ENCODE measurements at regions of chr5 and their contacts with region 1.

Region 1: DNA sequence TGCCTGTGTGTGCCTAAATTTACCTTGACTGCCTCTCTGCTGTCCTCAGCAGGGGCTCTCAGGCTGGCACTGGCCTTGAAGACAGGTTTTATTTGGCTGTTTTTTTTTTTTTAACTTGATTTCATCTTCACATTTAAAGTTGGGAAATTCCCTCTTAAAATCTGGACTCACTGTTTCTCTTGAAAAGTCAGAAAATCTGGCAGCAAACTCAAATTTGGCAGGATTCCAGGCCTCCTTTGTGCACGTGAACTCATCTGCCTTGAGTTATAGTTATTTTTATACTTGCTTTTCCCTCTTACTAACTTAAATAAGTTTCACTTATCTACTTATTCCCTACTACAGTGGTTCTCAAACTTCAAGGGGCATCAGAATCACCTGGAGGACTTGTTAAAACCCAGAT is 118.4 kb upstream of the MAP3K1 start:
- DNase-seq: peak in 1 of 5 donors; percentile 49
- H3K4me3 ChIP-seq: no peak overlapping the region
- H3K4me3 Mint-ChIP-seq: peak overlapping the region in 4 of 8 donors; percentile 11 to 60 (median 29)
- H3K27ac ChIP-seq: no peak overlapping the region
- H3K27ac Mint-ChIP-seq: peak overlapping the region; percentile 64 to 82 (median 75)
- H3K4me1 ChIP-seq: peaks cover 91% of the 10 kb centered on the region
- H3K4me1 Mint-ChIP-seq: peaks cover 72 to 98% (median 86%) of the 10 kb centered on the region in 4 donors
- H3K27me3 ChIP-seq: no peaks in the 10 kb centered on the region
- H3K27me3 Mint-ChIP-seq: no peaks in the 10 kb centered on the region

Region 2: GRCh38 chr5:56588636-56589480 is 108.0 kb before region 1 on chr5:
- CTCF ChIA-PET with region 1: interaction called, 5 read pairs
- POLR2A ChIA-PET with region 1: interaction called, 11 read pairs
- intact Hi-C with region 1: loop called (anchors 5 kb)
- DNase-seq: peak; percentile 73 to 88 (median 82)
- H3K4me3 ChIP-seq: no peak overlapping the region
- H3K4me3 Mint-ChIP-seq: peak overlapping the region; percentile 49 to 81 (median 68)
- H3K27ac ChIP-seq: peak overlapping the region; percentile 72
- H3K27ac Mint-ChIP-seq: peak overlapping the region; percentile 91 to 98 (median 95)
- H3K4me1 ChIP-seq: peaks cover 52% of the 10 kb centered on the region
- H3K4me1 Mint-ChIP-seq: peaks cover 52 to 74% (median 61%) of the 10 kb centered on the region in 4 donors
- H3K27me3 ChIP-seq: no peaks in the 10 kb centered on the region
- H3K27me3 Mint-ChIP-seq: no peaks in the 10 kb centered on the region

Region 3: GRCh38 chr5:56670118-56670483 is 26.8 kb before region 1 on chr5:
- CTCF ChIA-PET with region 1: interaction called, 16 read pairs
- POLR2A ChIA-PET with region 1: interaction called, 11 read pairs
- intact Hi-C with region 1: no loop called
- DNase-seq: peak in 4 of 5 donors; percentile 26 to 67 (median 48)
- H3K4me3 ChIP-seq: no peak overlapping the region
- H3K4me3 Mint-ChIP-seq: peak overlapping the region in 7 of 8 donors; percentile 54 to 89 (median 76)
- H3K27ac ChIP-seq: peak overlapping the region; percentile 48
- H3K27ac Mint-ChIP-seq: peak overlapping the region; percentile 89 to 97 (median 93)
- H3K4me1 ChIP-seq: peaks cover 54% of the 10 kb centered on the region
- H3K4me1 Mint-ChIP-seq: peaks cover 23 to 52% (median 44%) of the 10 kb centered on the region in 4 donors
- H3K27me3 ChIP-seq: no peaks in the 10 kb centered on the region
- H3K27me3 Mint-ChIP-seq: no peaks in the 10 kb centered on the region

Region 4: GRCh38 chr5:56681346-56681745 is 15.6 kb before region 1 on chr5:
- CTCF ChIA-PET with region 1: interaction called, 9 read pairs
- POLR2A ChIA-PET with region 1: interaction called, 93 read pairs
- intact Hi-C with region 1: loop called (anchors 2 kb)
- DNase-seq: no peak
- H3K4me3 ChIP-seq: no peak overlapping the region
- H3K4me3 Mint-ChIP-seq: peak overlapping the region in 7 of 8 donors; percentile 15 to 77 (median 50)
- H3K27ac ChIP-seq: no peak overlapping the region
- H3K27ac Mint-ChIP-seq: peak overlapping the region; percentile 19 to 93 (median 79)
- H3K4me1 ChIP-seq: peaks cover 72% of the 10 kb centered on the region
- H3K4me1 Mint-ChIP-seq: peaks cover 43 to 77% (median 61%) of the 10 kb centered on the region in 4 donors
- H3K27me3 ChIP-seq: no peaks in the 10 kb centered on the region
- H3K27me3 Mint-ChIP-seq: no peaks in the 10 kb centered on the region

Region 5: DNA sequence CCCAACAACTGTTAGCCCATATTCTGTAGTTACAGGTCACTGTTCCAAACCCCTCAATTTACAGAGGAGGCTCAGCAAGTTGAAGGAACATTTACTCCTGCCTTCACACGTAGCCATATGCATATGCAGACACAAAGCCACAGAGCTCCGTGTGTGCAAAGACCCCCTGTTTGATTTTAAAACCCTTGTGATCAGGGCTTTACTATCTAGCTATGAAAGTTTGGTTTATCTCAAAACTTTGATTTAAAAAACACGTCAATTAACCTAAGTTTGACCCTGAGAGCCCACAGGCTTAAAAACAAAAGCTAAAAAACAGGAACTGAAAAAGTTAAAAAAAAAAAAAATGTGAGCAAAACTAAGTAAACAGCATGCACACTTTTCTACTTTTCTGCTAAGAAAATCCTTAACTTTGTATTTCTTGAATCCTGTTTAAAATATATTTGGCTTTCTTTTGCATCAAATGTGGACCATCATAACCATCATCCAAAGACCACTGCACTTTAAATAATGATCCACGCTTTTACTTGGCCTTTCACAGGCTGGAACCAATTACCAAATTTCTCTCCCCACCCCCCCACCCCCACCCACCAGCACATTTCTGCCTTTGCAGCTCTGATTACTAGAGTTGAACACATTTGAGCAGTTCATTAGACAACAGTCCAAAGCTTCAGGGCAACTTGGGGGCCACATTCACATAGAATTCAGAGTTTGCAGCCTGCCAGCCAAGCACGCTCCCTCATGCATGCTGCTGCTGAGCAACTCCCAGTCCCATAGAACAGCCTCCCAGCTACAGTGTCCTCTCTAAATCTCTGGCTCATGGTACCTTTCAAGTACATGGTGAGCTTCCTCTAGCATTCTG is 10.3 kb before region 1 on chr5:
- CTCF ChIA-PET with region 1: interaction called, 9 read pairs
- POLR2A ChIA-PET with region 1: interaction called, 93 read pairs
- intact Hi-C with region 1: loop called (anchors 2 kb)
- DNase-seq: peak in 4 of 5 donors; percentile 33 to 48 (median 41)
- H3K4me3 ChIP-seq: peak overlapping the region in 1 of 2 donors; percentile 15
- H3K4me3 Mint-ChIP-seq: peak overlapping the region in 7 of 8 donors; percentile 29 to 72 (median 52)
- H3K27ac ChIP-seq: peak overlapping the region; percentile 31
- H3K27ac Mint-ChIP-seq: peak overlapping the region; percentile 44 to 91 (median 84)
- H3K4me1 ChIP-seq: peaks cover 99% of the 10 kb centered on the region
- H3K4me1 Mint-ChIP-seq: peaks cover 60 to 100% (median 80%) of the 10 kb centered on the region in 4 donors
- H3K27me3 ChIP-seq: no peaks in the 10 kb centered on the region
- H3K27me3 Mint-ChIP-seq: no peaks in the 10 kb centered on the region

Region 6: GRCh38 chr5:56710826-56711590 is 14.1 kb after region 1 on chr5:
- CTCF ChIA-PET with region 1: interaction called, 3 read pairs
- POLR2A ChIA-PET with region 1: interaction called, 13 read pairs
- intact Hi-C with region 1: no loop called
- DNase-seq: peak in 3 of 5 donors; percentile 15 to 45 (median 30)
- H3K4me3 ChIP-seq: no peak overlapping the region
- H3K4me3 Mint-ChIP-seq: peak overlapping the region in 4 of 8 donors; percentile 0 to 43 (median 26)
- H3K27ac ChIP-seq: no peak overlapping the region
- H3K27ac Mint-ChIP-seq: peak overlapping the region in 5 of 7 donors; percentile 3 to 67 (median 18)
- H3K4me1 ChIP-seq: peaks cover 16% of the 10 kb centered on the region
- H3K4me1 Mint-ChIP-seq: peaks cover 21 to 53% (median 29%) of the 10 kb centered on the region in 4 donors
- H3K27me3 ChIP-seq: no peaks in the 10 kb centered on the region
- H3K27me3 Mint-ChIP-seq: peaks cover 0 to 2% of the 10 kb centered on the region in 2 donors

Region 7: GRCh38 chr5:56737002-56737621 is 40.2 kb after region 1 on chr5:
- CTCF ChIA-PET with region 1: interaction called, 5 read pairs
- POLR2A ChIA-PET with region 1: interaction called, 17 read pairs
- intact Hi-C with region 1: no loop called
- DNase-seq: no peak
- H3K4me3 ChIP-seq: no peak overlapping the region
- H3K4me3 Mint-ChIP-seq: peak overlapping the region in 7 of 8 donors; percentile 49 to 85 (median 74)
- H3K27ac ChIP-seq: peak overlapping the region; percentile 45
- H3K27ac Mint-ChIP-seq: peak overlapping the region; percentile 73 to 97 (median 94)
- H3K4me1 ChIP-seq: peaks cover 55% of the 10 kb centered on the region
- H3K4me1 Mint-ChIP-seq: peaks cover 39 to 68% (median 56%) of the 10 kb centered on the region in 4 donors
- H3K27me3 ChIP-seq: no peaks in the 10 kb centered on the region
- H3K27me3 Mint-ChIP-seq: no peaks in the 10 kb centered on the region

Measured in CD4-positive, alpha-beta memory T cell (primary cell).